ENCODE measurements at regions of chr16 and their contacts with region 1.

Region 1: DNA sequence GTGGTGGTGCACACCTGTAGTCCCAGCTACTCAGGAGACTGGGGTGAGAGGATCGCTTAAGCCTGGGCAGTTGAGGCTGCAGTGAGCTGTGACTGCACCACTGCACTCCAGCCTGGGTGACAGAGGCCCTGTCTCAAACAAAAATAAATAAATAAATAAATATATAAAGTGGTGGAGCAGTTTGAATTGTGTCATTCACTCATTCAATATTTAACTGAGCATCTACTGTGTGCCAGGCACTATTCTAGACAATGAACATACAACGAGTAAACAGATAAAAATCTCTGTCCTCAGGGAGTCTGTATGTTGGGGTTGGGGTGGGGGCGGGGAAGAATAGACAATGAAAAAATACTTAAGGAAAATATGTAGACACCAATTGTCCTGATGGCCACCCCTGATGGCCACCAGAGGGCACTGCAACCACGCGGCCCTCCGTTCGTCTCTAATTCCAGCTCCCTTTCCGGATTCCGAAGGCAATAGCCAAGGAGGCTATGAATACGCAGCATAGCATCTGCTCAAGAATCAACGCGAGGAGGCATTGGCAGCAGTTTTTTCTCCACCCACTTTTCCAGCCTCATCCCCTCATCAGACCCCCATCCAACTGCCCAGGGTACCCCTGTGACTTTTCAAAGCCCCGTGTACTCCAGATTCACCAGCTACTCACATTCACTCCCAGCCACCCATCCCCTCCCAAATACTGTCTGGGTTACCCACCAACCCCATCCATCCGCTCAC is 21.4 kb downstream of the QPRT start:
- DNase-seq: peak; percentile 75 to 92
- ATAC-seq: peak; percentile 56 to 76 (median 62)
- H3K4me3 ChIP-seq: no peak overlapping the region
- H3K4me3 Mint-ChIP-seq: peak overlapping the region; percentile 92
- H3K27ac ChIP-seq: peak overlapping the region; percentile 30
- H3K27ac Mint-ChIP-seq: peak overlapping the region; percentile 94 to 99
- H3K4me1 ChIP-seq: peaks cover 32% of the 10 kb centered on the region
- H3K4me1 Mint-ChIP-seq: peaks cover 26 to 35% of the 10 kb centered on the region in 2 donors
- H3K27me3 ChIP-seq: no peaks in the 10 kb centered on the region
- H3K27me3 Mint-ChIP-seq: peaks cover 0 to 3% of the 10 kb centered on the region in 2 donors
- CTCF ChIP-seq: peak; percentile 90

Region 2: GRCh38 chr16:29710227-29711219 is 10.1 kb after region 1 on chr16:
- intact Hi-C with region 1: loop called (anchors 1 kb)
- DNase-seq: peak in 1 of 2 donors; percentile 85
- ATAC-seq: peak; percentile 72 to 97 (median 96)
- H3K4me3 ChIP-seq: no peak overlapping the region
- H3K4me3 Mint-ChIP-seq: no peak overlapping the region
- H3K27ac ChIP-seq: no peak overlapping the region
- H3K27ac Mint-ChIP-seq: peak overlapping the region in 1 of 2 donors; percentile 72
- H3K4me1 ChIP-seq: peaks cover 2% of the 10 kb centered on the region
- H3K4me1 Mint-ChIP-seq: peaks cover 9 to 12% of the 10 kb centered on the region in 2 donors
- H3K27me3 ChIP-seq: no peaks in the 10 kb centered on the region
- H3K27me3 Mint-ChIP-seq: no peaks in the 10 kb centered on the region
- CTCF ChIP-seq: peak; percentile 70

Region 3: GRCh38 chr16:29790183-29790952 is 89.9 kb after region 1 on chr16 and contains the start of gene KIF22:
- intact Hi-C with region 1: loop called (anchors 1 kb)
- DNase-seq: peak; percentile 99 to 100
- ATAC-seq: peak; percentile 92 to 97 (median 93)
- H3K4me3 ChIP-seq: peak within 1 kb of the TSS; percentile 99
- H3K4me3 Mint-ChIP-seq: peak within 1 kb of the TSS; percentile 96
- H3K27ac ChIP-seq: peak within 1 kb of the TSS; percentile 82
- H3K27ac Mint-ChIP-seq: peak within 1 kb of the TSS; percentile 92
- H3K4me1 ChIP-seq: peaks cover 34% of the 10 kb centered on the region
- H3K4me1 Mint-ChIP-seq: peaks cover 43% of the 10 kb centered on the region in 2 donors
- H3K27me3 ChIP-seq: no peaks in the 10 kb centered on the region
- H3K27me3 Mint-ChIP-seq: no peaks in the 10 kb centered on the region
- CTCF ChIP-seq: peak; percentile 79
- total RNA-seq, gene KIF22: 73.4 to 96.0 (median 86.5) TPM

Region 4: DNA sequence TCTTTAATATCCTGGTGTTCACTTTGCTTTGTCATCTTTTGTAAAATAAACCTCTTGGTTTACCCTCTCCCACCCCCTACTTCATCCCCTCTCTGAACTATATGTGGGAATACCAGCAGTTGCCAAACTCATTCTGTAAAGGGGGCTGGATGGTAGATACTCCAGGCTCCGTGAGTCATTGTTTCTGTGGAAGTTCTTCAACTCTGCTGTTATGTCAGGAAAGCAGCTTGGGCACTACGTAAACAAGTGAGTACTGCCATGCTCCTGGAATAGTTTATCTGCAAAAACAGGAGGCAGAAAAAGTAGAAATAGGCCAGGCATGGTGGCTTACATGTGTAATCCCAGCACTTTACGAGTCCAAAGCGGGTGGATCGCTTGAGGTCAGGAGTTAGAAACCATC is 137.4 kb after region 1 on chr16:
- intact Hi-C with region 1: no loop called
- DNase-seq: no peak
- ATAC-seq: no peak
- H3K4me3 ChIP-seq: no peak overlapping the region
- H3K4me3 Mint-ChIP-seq: no peak overlapping the region
- H3K27ac ChIP-seq: no peak overlapping the region
- H3K27ac Mint-ChIP-seq: no peak overlapping the region
- H3K4me1 ChIP-seq: no peaks in the 10 kb centered on the region
- H3K4me1 Mint-ChIP-seq: no peaks in the 10 kb centered on the region
- H3K27me3 ChIP-seq: no peaks in the 10 kb centered on the region
- H3K27me3 Mint-ChIP-seq: no peaks in the 10 kb centered on the region
- CTCF ChIP-seq: no peak

Region 5: GRCh38 chr16:29848420-29849297 is 148.2 kb after region 1 on chr16:
- intact Hi-C with region 1: loop called (anchors 1 kb)
- DNase-seq: peak; percentile 75 to 89
- ATAC-seq: peak; percentile 85 to 97 (median 90)
- H3K4me3 ChIP-seq: no peak overlapping the region
- H3K4me3 Mint-ChIP-seq: no peak overlapping the region
- H3K27ac ChIP-seq: no peak overlapping the region
- H3K27ac Mint-ChIP-seq: peak overlapping the region; percentile 36 to 75
- H3K4me1 ChIP-seq: peaks cover 5% of the 10 kb centered on the region
- H3K4me1 Mint-ChIP-seq: peaks cover 0 to 6% of the 10 kb centered on the region in 2 donors
- H3K27me3 ChIP-seq: no peaks in the 10 kb centered on the region
- H3K27me3 Mint-ChIP-seq: no peaks in the 10 kb centered on the region
- CTCF ChIP-seq: peak; percentile 84

Region 6: GRCh38 chr16:30005341-30006094 is 305.1 kb after region 1 on chr16:
- intact Hi-C with region 1: loop called (anchors 5 kb)
- DNase-seq: peak in 1 of 2 donors; percentile 71
- ATAC-seq: peak; percentile 52 to 89 (median 79)
- H3K4me3 ChIP-seq: no peak overlapping the region
- H3K4me3 Mint-ChIP-seq: no peak overlapping the region
- H3K27ac ChIP-seq: no peak overlapping the region
- H3K27ac Mint-ChIP-seq: no peak overlapping the region
- H3K4me1 ChIP-seq: peaks cover 7% of the 10 kb centered on the region
- H3K4me1 Mint-ChIP-seq: peaks cover 0 to 24% of the 10 kb centered on the region in 2 donors
- H3K27me3 ChIP-seq: peaks cover 9% of the 10 kb centered on the region
- H3K27me3 Mint-ChIP-seq: peaks cover 0 to 15% of the 10 kb centered on the region in 2 donors
- CTCF ChIP-seq: peak; percentile 70